Spleen (tissue), 13 donors: ENCODE measurements at regions of chr2 and their contacts with region 1.

Region 1: DNA sequence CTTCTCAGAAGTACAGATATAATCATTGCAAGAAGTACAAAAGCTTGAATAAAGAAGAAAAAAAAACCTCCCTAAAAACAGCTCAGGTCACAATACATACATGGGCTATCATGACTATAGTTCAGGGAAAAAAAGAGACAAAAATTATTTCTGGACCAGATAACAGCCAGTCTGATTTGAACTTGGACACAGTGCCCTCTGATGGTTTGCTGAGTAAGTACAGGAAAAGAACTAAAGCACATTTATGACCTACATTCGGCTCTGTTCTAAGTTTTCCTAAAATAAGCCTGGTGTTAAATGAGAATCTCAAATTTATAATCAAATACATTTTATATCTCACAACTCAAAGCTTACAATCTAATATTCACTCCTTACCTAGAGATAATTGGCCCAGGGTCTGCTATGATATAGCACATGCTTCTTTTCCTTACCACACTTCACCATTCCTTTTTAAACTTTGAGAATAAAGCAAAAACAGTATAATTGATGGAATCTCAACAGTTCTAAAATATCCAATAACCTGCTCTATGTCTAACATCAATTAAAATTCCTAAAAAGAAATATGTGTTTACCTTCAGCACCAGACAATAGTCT is 81.1 kb downstream of the RAPH1 start:
- DNase-seq: no peak
- H3K4me3 ChIP-seq: no peak overlapping the region
- H3K27ac ChIP-seq: no peak overlapping the region
- H3K4me1 ChIP-seq: peaks cover 0 to 21% (median 8%) of the 10 kb centered on the region in 6 donors
- H3K27me3 ChIP-seq: no peaks in the 10 kb centered on the region
- CTCF ChIP-seq: peak; percentile 16 to 75 (median 64)
- POLR2A ChIP-seq: no peak

Region 2: DNA sequence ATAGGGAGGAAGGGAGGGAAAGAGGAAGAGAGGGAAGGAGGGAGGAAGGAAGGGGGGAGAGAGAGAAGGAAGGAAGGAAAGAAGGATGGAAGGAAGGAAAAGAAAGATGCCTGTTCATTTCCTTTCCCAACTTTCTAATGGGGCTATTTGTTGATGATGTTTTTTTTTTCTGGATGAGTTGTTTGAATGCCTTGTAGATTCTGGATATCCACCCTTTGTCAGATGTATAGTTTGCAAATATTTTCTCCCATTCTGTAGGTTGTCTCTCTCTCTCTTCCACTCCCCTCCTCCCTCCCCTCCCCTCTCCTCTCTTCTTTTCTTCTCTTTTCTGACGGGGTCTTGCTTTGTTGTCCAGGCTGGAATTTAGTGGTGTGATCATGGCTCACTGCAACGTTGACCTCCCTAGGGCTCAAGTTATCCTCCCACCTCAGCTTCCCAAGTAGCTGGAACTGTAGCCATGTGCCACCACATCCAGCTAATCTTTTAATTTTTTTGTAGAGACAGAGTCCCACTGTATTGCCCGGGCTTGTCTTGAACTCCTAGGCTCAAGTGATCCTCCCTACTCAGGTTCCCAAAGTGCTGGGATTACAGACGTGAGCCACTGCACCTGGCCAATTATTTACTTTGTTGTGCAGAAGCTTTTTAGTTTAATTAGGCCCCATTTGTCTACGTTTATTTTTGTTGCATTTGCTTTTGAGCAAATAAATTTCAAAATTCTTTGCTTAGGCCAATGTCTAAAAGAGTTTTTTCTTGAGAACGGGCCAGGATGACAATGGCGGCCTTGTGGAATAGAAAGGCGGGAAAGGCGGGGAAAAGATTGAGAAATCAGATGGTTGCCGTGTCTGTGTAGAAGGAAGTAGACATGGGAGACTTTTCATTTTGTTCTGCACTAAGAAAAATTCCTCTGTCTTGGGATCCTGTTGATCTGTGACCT is 876.4 kb before region 1 on chr2:
- intact Hi-C with region 1: loop called (anchors 10 kb)
- DNase-seq: no peak
- H3K4me3 ChIP-seq: no peak overlapping the region
- H3K27ac ChIP-seq: no peak overlapping the region
- H3K4me1 ChIP-seq: no peaks in the 10 kb centered on the region
- H3K27me3 ChIP-seq: no peaks in the 10 kb centered on the region
- CTCF ChIP-seq: no peak
- POLR2A ChIP-seq: no peak

Region 3: DNA sequence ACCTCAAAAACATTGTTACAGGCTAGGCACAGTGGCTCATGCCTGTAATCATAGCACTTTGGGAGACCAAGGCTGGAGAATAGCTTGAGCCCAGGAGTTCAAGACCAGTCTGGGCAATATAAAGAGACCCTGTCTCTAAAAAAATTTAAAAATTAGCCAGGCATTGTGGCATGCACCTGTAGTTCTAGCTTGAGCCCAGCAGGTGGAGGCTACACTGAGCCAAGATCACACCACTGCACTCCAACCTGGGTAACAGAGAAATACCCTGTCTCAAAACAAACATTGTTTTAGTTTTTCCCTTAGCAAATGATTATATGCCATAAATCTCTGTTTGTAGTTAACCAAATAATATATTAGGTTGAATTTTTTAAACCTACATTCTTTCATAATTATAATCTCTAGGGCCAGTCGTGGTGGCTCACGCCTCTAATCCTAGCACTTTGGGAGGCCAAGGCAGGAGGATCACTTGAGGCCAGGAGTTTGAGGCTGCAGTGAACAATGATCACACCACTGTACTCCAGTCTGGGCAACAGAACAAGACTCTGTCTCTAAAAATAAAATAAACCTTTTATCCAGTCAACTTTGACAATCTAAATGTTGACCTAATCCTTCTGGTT is 228.4 kb before region 1 on chr2:
- intact Hi-C with region 1: loop called (anchors 10 kb)
- DNase-seq: peak; percentile 48
- H3K4me3 ChIP-seq: no peak overlapping the region
- H3K27ac ChIP-seq: no peak overlapping the region
- H3K4me1 ChIP-seq: no peaks in the 10 kb centered on the region
- H3K27me3 ChIP-seq: no peaks in the 10 kb centered on the region
- CTCF ChIP-seq: peak in 10 of 11 experiments; percentile 43 to 74 (median 64)
- POLR2A ChIP-seq: no peak